GM12878 (cell line): ENCODE measurements at regions of chr22 and their contacts with region 1.

Region 1: GRCh38 chr22:31977141-31977841 is 33.0 kb downstream of the YWHAH start:
- DNase-seq: peak; percentile 24
- ATAC-seq: peak; percentile 98
- H3K4me3 ChIP-seq: no peak overlapping the region
- H3K27ac ChIP-seq: no peak overlapping the region
- H3K4me1 ChIP-seq: no peaks in the 10 kb centered on the region
- H3K27me3 ChIP-seq: no peaks in the 10 kb centered on the region
- CTCF ChIP-seq: peak; percentile 78 to 83 (median 80)
- EP300 ChIP-seq: no peak
- POLR2A ChIP-seq: no peak
- RAD21 ChIP-seq: peak; percentile 83

Region 2: GRCh38 chr22:31692186-31692886 is 285.0 kb before region 1 on chr22:
- CTCF ChIA-PET with region 1: no interaction called
- POLR2A ChIA-PET with region 1: no interaction called
- RAD21 ChIA-PET with region 1: no interaction called
- SMC1A ChIA-PET with region 1: no interaction called
- in situ Hi-C with region 1: no loop called
- intact Hi-C with region 1: no loop called
- DNase-seq: no peak
- ATAC-seq: peak; percentile 78
- H3K4me3 ChIP-seq: no peak overlapping the region
- H3K27ac ChIP-seq: no peak overlapping the region
- H3K4me1 ChIP-seq: peaks cover 7% of the 10 kb centered on the region
- H3K27me3 ChIP-seq: no peaks in the 10 kb centered on the region
- CTCF ChIP-seq: no peak
- EP300 ChIP-seq: 0 out of 4 replicates have a peak, but pooled peaks of 1 of the 2 experiments have one; percentile 20
- POLR2A ChIP-seq: no peak
- RAD21 ChIP-seq: no peak

Region 3: DNA sequence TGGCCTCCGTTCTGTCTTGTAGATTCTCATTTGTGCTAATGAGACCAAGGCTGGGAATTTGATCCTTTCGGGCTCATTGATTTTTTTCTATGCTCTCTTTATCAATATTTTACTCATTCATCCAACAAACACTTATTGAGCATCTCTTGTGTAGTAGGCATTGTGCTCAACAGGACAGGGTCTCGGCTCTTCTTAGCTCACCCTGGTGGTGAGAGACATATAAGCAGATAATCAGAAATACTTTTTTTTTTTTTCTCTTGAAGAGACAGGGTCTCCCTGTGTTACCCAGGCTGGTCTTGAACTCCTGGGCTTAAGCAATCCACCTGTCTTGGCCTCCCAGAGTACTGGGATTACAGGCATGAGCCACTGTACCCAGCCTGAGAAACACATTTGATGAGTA is 17.8 kb after region 1 on chr22:
- CTCF ChIA-PET with region 1: interaction called, 21 read pairs
- POLR2A ChIA-PET with region 1: no interaction called
- RAD21 ChIA-PET with region 1: interaction called, 3 read pairs
- SMC1A ChIA-PET with region 1: interaction called, 6 read pairs
- in situ Hi-C with region 1: no loop called
- intact Hi-C with region 1: no loop called
- DNase-seq: no peak
- ATAC-seq: no peak
- H3K4me3 ChIP-seq: no peak overlapping the region
- H3K27ac ChIP-seq: no peak overlapping the region
- H3K4me1 ChIP-seq: no peaks in the 10 kb centered on the region
- H3K27me3 ChIP-seq: no peaks in the 10 kb centered on the region; a peak in 2 of 4 replicates
- CTCF ChIP-seq: no peak
- EP300 ChIP-seq: no peak
- POLR2A ChIP-seq: no peak
- RAD21 ChIP-seq: no peak

Region 4: DNA sequence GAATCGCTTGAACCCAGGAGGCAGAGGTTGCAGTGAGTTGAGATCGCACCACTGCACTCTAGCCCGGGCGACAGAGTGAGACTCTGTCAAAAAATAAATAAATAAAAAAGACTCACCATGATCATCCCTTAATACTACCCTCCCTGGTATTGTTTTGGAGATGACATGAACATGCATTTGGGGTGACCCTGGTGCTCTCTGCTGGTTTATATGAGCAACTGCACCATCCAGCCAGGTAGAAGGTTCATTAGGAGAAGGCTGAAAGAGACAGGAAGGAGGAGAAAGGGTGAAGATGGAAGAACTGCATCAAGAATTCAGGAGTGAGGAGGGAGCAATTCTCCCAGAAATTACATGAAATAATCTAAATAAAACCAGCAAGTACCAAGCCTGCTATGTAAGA is 103.6 kb after region 1 on chr22:
- CTCF ChIA-PET with region 1: interaction called, 128 read pairs
- POLR2A ChIA-PET with region 1: no interaction called
- RAD21 ChIA-PET with region 1: interaction called, 8 read pairs
- SMC1A ChIA-PET with region 1: interaction called, 36 read pairs
- in situ Hi-C with region 1: loop called (anchors 5 kb)
- intact Hi-C with region 1: loop called (anchors 1 kb)
- DNase-seq: peak; percentile 7
- ATAC-seq: peak; percentile 84
- H3K4me3 ChIP-seq: no peak overlapping the region
- H3K27ac ChIP-seq: no peak overlapping the region
- H3K4me1 ChIP-seq: no peaks in the 10 kb centered on the region
- H3K27me3 ChIP-seq: no peaks in the 10 kb centered on the region; a peak in 1 of 4 replicates
- CTCF ChIP-seq: peak; percentile 70 to 79 (median 73)
- EP300 ChIP-seq: no peak
- POLR2A ChIP-seq: no peak
- RAD21 ChIP-seq: peak; percentile 83

Region 5: GRCh38 chr22:32202539-32203180 is 225.4 kb after region 1 on chr22:
- CTCF ChIA-PET with region 1: interaction called, 5 read pairs
- POLR2A ChIA-PET with region 1: no interaction called
- RAD21 ChIA-PET with region 1: no interaction called
- SMC1A ChIA-PET with region 1: no interaction called
- in situ Hi-C with region 1: no loop called
- intact Hi-C with region 1: loop called (anchors 5 kb)
- DNase-seq: no peak
- ATAC-seq: peak; percentile 79
- H3K4me3 ChIP-seq: no peak overlapping the region
- H3K27ac ChIP-seq: no peak overlapping the region
- H3K4me1 ChIP-seq: no peaks in the 10 kb centered on the region
- H3K27me3 ChIP-seq: peaks cover 0 to 4% of the 10 kb centered on the region in 2 experiments; a peak in 2 of 4 replicates
- CTCF ChIP-seq: peak; percentile 43 to 54 (median 49)
- EP300 ChIP-seq: no peak
- POLR2A ChIP-seq: no peak
- RAD21 ChIP-seq: 0 out of 2 replicates have a peak, but pooled peaks have one; percentile 12

Region 6: GRCh38 chr22:32265882-32266767 is 288.8 kb after region 1 on chr22:
- CTCF ChIA-PET with region 1: interaction called, 25 read pairs
- POLR2A ChIA-PET with region 1: interaction called, 5 read pairs
- RAD21 ChIA-PET with region 1: interaction called, 14 read pairs
- SMC1A ChIA-PET with region 1: interaction called, 16 read pairs
- in situ Hi-C with region 1: no loop called
- intact Hi-C with region 1: loop called (anchors 5 kb)
- DNase-seq: no peak
- ATAC-seq: peak; percentile 82
- H3K4me3 ChIP-seq: no peak overlapping the region
- H3K27ac ChIP-seq: no peak overlapping the region
- H3K4me1 ChIP-seq: no peaks in the 10 kb centered on the region
- H3K27me3 ChIP-seq: 0 out of 4 replicates have a peak, but pooled peaks cover 0 to 1% of the 10 kb centered on the region in 2 experiments
- CTCF ChIP-seq: peak; percentile 73 to 83 (median 79)
- EP300 ChIP-seq: no peak
- POLR2A ChIP-seq: no peak
- RAD21 ChIP-seq: peak; percentile 51